Activated naive CD4-positive, alpha-beta T cell treated with anti-CD3 and anti-CD28 coated beads for 36 hours (primary cell): ENCODE measurements at regions of chr6 and their contacts with region 1.

Region 1: GRCh38 chr6:145028144-145028818 is 707.0 kb downstream of the EPM2A start:
- DNase-seq: peak; percentile 38
- H3K4me3 Mint-ChIP-seq: no peak overlapping the region
- H3K27ac Mint-ChIP-seq: no peak overlapping the region
- H3K4me1 Mint-ChIP-seq: no peaks in the 10 kb centered on the region
- H3K27me3 Mint-ChIP-seq: peaks cover 24% of the 10 kb centered on the region

Region 2: DNA sequence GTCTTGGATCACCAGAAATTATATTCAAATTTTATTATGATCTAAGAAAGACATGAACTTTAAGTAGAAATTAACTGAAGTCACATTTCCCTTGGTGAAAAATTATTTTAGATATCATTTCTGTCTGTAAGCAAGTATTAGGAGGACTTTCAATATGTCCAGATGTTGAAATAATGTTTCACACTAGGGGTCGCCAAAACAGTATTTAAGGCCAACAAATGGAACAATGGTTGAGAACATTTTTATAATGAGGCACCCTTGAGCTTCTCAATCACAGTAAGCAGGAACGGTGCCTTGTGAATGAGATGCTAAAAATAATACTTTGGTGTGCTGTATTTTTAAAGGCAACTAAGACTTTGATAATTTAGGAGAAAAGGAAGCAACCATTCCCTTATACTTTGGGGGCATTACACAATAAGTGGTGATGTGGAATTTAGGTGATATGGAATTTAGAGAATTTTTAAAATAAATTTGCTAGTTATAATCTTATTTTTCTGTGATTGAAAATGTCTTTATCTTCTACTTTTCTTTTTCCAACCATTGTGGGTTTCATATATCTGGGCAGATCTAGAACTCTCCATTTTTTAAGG is 923.3 kb before region 1 on chr6:
- CTCF ChIA-PET with region 1: no interaction called
- intact Hi-C with region 1: loop called (anchors 1 kb)
- DNase-seq: peak; percentile 48
- H3K4me3 Mint-ChIP-seq: no peak overlapping the region
- H3K27ac Mint-ChIP-seq: no peak overlapping the region
- H3K4me1 Mint-ChIP-seq: peaks cover 11% of the 10 kb centered on the region
- H3K27me3 Mint-ChIP-seq: no peaks in the 10 kb centered on the region

Region 3: GRCh38 chr6:144264270-144265060 is 763.8 kb before region 1 on chr6:
- CTCF ChIA-PET with region 1: no interaction called
- intact Hi-C with region 1: loop called (anchors 5 kb)
- DNase-seq: no peak
- H3K4me3 Mint-ChIP-seq: no peak overlapping the region
- H3K27ac Mint-ChIP-seq: no peak overlapping the region
- H3K4me1 Mint-ChIP-seq: no peaks in the 10 kb centered on the region
- H3K27me3 Mint-ChIP-seq: no peaks in the 10 kb centered on the region